PC-3 (cell line): ENCODE measurements at regions of chr2 and their contacts with region 1.

Region 1: GRCh38 chr2:194363295-194363694 is 1293.7 kb upstream of the SLC39A10 start:
- DNase-seq: no peak
- ATAC-seq: no peak
- H3K4me3 ChIP-seq: no peak overlapping the region
- H3K27ac ChIP-seq: no peak overlapping the region
- H3K4me1 ChIP-seq: no peaks in the 10 kb centered on the region
- H3K27me3 ChIP-seq: no peaks in the 10 kb centered on the region
- CTCF ChIP-seq: no peak

Region 2: DNA sequence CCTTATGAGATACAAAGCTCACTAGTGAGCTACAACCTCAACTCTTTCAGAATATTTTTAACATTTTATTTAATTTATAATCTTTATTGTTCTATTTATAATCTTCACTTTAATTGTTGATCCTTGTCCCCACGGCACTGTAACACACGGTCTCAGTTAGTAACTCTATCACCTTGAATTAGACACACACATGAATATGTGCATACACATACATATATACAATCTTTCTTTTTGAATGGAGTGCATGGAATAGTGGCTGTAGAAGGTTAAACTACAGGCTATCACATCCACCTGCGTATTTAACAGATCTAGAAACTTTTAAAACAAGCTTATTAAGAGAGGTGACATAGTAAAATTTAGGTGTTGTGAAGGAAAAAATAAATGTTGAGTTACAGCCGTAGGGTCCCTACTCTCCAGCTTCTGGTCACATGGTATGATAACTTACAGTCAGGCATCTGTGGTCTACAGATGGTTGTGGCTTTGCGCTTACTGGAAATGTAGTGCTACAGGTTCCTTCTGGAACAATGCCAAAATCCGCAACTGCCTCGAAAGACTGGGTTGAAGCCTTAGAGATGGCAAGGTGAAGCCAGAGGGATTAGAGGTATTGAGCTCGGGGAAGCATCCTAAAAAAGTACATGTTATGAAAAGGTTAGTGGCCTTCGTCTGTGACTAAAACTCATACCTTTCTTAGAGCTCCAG is 30.3 kb before region 1 on chr2:
- CTCF ChIA-PET with region 1: no interaction called
- POLR2A ChIA-PET with region 1: no interaction called
- intact Hi-C with region 1: no loop called
- DNase-seq: no peak
- ATAC-seq: no peak
- H3K4me3 ChIP-seq: no peak overlapping the region
- H3K27ac ChIP-seq: no peak overlapping the region
- H3K4me1 ChIP-seq: no peaks in the 10 kb centered on the region
- H3K27me3 ChIP-seq: no peaks in the 10 kb centered on the region
- CTCF ChIP-seq: no peak

Region 3: DNA sequence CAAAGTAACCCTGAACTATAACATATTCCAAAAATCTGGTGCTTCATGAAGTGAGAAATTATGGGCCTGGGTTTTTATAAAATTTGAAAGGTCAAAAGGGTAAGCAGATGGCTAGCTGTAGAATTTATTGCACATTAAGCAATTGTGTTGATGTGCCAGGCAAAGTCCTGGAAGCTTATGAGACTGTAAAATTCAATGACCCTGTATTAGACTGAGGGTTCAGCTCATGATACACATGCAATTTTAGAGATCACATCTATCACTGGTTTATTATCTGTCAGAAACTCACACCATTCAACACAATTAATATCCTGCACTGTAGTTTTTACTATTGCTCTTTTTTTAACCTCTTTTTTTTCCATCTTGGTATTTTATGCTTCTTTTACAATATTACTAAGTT is 131.1 kb after region 1 on chr2:
- CTCF ChIA-PET with region 1: no interaction called
- POLR2A ChIA-PET with region 1: no interaction called
- intact Hi-C with region 1: loop called (anchors 10 kb)
- DNase-seq: no peak
- ATAC-seq: no peak
- H3K4me3 ChIP-seq: no peak overlapping the region
- H3K27ac ChIP-seq: no peak overlapping the region
- H3K4me1 ChIP-seq: no peaks in the 10 kb centered on the region
- H3K27me3 ChIP-seq: no peaks in the 10 kb centered on the region
- CTCF ChIP-seq: no peak